B cell (primary cell): ENCODE measurements at regions of chr7 and their contacts with region 1.

Region 1: GRCh38 chr7:116211006-116211912 is 920 bp downstream of the TES start:
- DNase-seq: peak; percentile 79
- ATAC-seq: peak; percentile 58
- H3K4me3 ChIP-seq: peak overlapping the region; percentile 70 to 97 (median 85)
- H3K4me3 Mint-ChIP-seq: peak overlapping the region; percentile 99
- H3K27ac ChIP-seq: peak overlapping the region; percentile 82 to 89
- H3K27ac Mint-ChIP-seq: peak overlapping the region; percentile 99
- H3K4me1 ChIP-seq: peaks cover 37 to 40% of the 10 kb centered on the region in 2 donors
- H3K4me1 Mint-ChIP-seq: peaks cover 51% of the 10 kb centered on the region
- H3K27me3 ChIP-seq: no peaks in the 10 kb centered on the region
- H3K27me3 Mint-ChIP-seq: no peaks in the 10 kb centered on the region
- CTCF ChIP-seq: no peak

Region 2: GRCh38 chr7:114922016-114922651 is 1289.1 kb before region 1 on chr7 and contains the start of gene MDFIC:
- CTCF ChIA-PET with region 1: no interaction called
- POLR2A ChIA-PET with region 1: interaction called, 5 read pairs
- intact Hi-C with region 1: loop called (anchors 10 kb)
- DNase-seq: no peak
- ATAC-seq: peak; percentile 62
- H3K4me3 ChIP-seq: peak within 1 kb of the TSS; percentile 57 to 90 (median 88)
- H3K4me3 Mint-ChIP-seq: peak within 1 kb of the TSS; percentile 99
- H3K27ac ChIP-seq: peak within 1 kb of the TSS; percentile 82 to 91
- H3K27ac Mint-ChIP-seq: peak within 1 kb of the TSS; percentile 98
- H3K4me1 ChIP-seq: peaks cover 33 to 36% of the 10 kb centered on the region in 2 donors
- H3K4me1 Mint-ChIP-seq: peaks cover 70% of the 10 kb centered on the region
- H3K27me3 ChIP-seq: no peaks in the 10 kb centered on the region
- H3K27me3 Mint-ChIP-seq: no peaks in the 10 kb centered on the region
- CTCF ChIP-seq: no peak
- total RNA-seq, gene MDFIC: 56.0 and 66.1 TPM in 2 replicates

Region 3: GRCh38 chr7:115984120-115984519 is 227.1 kb before region 1 on chr7:
- CTCF ChIA-PET with region 1: no interaction called
- POLR2A ChIA-PET with region 1: no interaction called
- intact Hi-C with region 1: no loop called
- DNase-seq: no peak
- ATAC-seq: no peak
- H3K4me3 ChIP-seq: no peak overlapping the region
- H3K4me3 Mint-ChIP-seq: no peak overlapping the region
- H3K27ac ChIP-seq: no peak overlapping the region
- H3K27ac Mint-ChIP-seq: no peak overlapping the region
- H3K4me1 ChIP-seq: no peaks in the 10 kb centered on the region
- H3K4me1 Mint-ChIP-seq: no peaks in the 10 kb centered on the region
- H3K27me3 ChIP-seq: no peaks in the 10 kb centered on the region
- H3K27me3 Mint-ChIP-seq: no peaks in the 10 kb centered on the region
- CTCF ChIP-seq: no peak

Region 4: DNA sequence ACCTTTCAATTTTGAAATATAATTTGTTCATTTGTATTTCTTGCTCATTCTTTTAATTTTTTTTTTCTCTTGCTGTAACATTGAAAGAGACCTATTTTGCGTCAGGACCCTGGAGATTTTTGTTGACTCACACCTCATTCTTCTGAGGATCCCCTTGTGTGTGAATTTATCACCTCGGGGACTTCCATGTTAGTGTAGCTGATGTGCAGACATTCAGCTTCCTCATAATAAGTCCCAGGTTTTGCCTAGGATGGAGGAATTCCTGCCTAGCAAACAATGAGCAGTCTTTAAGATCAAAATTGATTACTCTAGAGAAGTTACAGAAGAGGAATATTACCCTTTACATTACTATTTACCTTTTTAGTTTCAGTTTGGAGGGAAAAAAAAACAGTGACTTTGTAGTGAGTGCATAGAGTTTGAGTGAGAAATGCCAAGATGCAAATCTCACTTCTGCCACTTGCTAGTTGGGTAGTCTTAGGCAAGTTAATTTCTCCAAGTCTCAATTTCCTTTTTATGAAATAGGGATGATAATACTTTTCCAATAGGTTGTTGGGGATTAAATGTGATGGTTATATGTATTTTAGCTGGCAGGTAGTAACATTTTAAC is 13.3 kb after region 1 on chr7:
- CTCF ChIA-PET with region 1: interaction called, 12 read pairs
- POLR2A ChIA-PET with region 1: interaction called, 3 read pairs
- intact Hi-C with region 1: loop called (anchors 1 kb)
- DNase-seq: peak; percentile 28
- ATAC-seq: peak; percentile 68
- H3K4me3 ChIP-seq: peak overlapping the region in 1 of 5 experiments; percentile 26
- H3K4me3 Mint-ChIP-seq: peak overlapping the region; percentile 73
- H3K27ac ChIP-seq: no peak overlapping the region
- H3K27ac Mint-ChIP-seq: peak overlapping the region; percentile 71
- H3K4me1 ChIP-seq: peaks cover 32 to 48% of the 10 kb centered on the region in 2 donors
- H3K4me1 Mint-ChIP-seq: peaks cover 74% of the 10 kb centered on the region
- H3K27me3 ChIP-seq: no peaks in the 10 kb centered on the region
- H3K27me3 Mint-ChIP-seq: no peaks in the 10 kb centered on the region
- CTCF ChIP-seq: no peak